Activated CD4-positive, alpha-beta T cell treated with anti-CD3 and anti-CD28 coated beads for 36 hours (primary cell): ENCODE measurements at regions of chr18 and their contacts with region 1.

Region 1: DNA sequence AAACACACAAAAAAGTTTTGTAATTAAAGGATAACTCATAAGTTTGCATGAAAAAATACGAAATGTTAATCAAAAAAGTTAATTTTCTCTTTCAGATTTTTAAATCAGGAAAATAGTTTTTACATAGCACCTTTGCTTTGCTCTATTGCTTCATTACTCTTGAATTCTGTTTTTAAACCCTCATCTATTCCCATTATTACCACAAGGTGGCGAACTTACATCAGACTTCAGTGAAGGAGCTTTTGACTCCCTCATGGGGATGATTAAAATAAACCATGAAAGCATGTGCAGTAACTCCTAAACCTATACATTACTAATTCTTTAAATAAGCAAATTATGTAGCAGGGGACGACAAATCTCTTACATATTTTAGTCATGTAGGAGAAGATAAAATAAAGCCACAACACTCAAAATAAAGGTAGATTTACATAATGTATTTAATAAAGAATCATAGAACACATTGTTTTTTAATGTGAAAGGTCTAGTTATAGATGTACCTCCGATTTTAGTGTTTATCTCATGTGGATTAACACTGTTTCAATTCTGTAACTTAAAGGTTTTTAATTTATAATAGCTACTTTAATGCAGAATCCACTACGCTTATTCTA is 105.2 kb downstream of the NETO1 start:
- DNase-seq: no peak
- ATAC-seq: no peak
- H3K4me3 Mint-ChIP-seq: no peak overlapping the region
- H3K27ac Mint-ChIP-seq: no peak overlapping the region
- H3K4me1 Mint-ChIP-seq: no peaks in the 10 kb centered on the region
- H3K27me3 Mint-ChIP-seq: peaks cover 2% of the 10 kb centered on the region

Region 2: DNA sequence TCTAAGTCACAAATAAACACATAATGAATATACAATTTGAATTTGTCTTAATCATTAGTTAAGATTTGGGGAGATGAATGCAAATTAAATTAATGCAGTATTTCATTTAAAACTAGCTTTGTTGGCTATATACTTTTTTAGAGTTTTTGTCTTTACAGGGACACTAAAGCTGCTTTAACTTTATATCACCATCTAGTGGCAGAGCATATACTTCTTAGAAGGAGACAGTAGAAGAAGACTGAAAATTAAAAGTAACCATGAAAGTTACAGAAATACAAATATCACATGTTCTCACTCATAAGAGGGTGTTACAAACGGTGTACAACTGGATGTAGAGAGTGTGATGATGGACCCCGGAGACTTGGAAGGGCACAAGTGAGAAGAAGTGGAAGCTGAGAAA is 373.5 kb after region 1 on chr18:
- CTCF ChIA-PET with region 1: no interaction called
- POLR2A ChIA-PET with region 1: no interaction called
- intact Hi-C with region 1: loop called (anchors 1 to 10 kb)
- DNase-seq: no peak
- ATAC-seq: no peak
- H3K4me3 Mint-ChIP-seq: no peak overlapping the region
- H3K27ac Mint-ChIP-seq: no peak overlapping the region
- H3K4me1 Mint-ChIP-seq: no peaks in the 10 kb centered on the region
- H3K27me3 Mint-ChIP-seq: no peaks in the 10 kb centered on the region

Region 3: DNA sequence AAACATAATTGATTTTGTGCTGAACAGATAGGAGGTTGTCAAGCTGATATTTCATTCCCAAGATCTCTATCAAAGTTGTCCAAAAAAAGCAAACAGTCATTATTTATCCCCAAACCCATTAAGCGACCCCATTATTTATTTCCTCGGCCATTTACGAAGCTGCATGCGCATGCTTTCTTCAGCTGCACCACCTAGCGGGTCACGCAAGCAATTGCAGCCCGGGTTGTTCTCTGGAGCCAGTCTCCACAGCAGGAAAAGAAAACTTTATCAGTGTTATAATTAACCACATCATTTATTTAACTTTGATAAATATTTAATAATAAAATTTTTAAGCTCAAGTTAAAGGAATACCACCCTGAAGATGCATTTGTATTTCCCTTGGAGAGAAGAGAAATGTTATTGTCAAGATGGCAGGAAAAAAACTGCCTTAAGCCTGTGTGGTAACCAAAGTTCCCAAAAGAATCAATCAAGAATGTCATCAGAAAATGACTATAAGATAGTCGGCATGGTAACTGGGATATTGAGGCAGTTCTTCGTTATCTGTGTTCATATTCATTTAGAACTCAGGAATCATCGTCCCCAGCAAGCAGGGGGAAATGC is 1080.3 kb after region 1 on chr18:
- CTCF ChIA-PET with region 1: interaction called, 16 read pairs
- POLR2A ChIA-PET with region 1: no interaction called
- intact Hi-C with region 1: loop called (anchors 1 to 2 kb)
- DNase-seq: peak; percentile 69
- ATAC-seq: peak; percentile 57
- H3K4me3 Mint-ChIP-seq: peak overlapping the region; percentile 34
- H3K27ac Mint-ChIP-seq: no peak overlapping the region
- H3K4me1 Mint-ChIP-seq: peaks cover 5% of the 10 kb centered on the region
- H3K27me3 Mint-ChIP-seq: peaks cover 3% of the 10 kb centered on the region

Region 4: GRCh38 chr18:74116633-74117554 is 1354.3 kb after region 1 on chr18:
- CTCF ChIA-PET with region 1: no interaction called
- POLR2A ChIA-PET with region 1: no interaction called
- intact Hi-C with region 1: loop called in 1 of 2 experiments (anchors 5 kb)
- DNase-seq: peak; percentile 55
- ATAC-seq: peak; percentile 70
- H3K4me3 Mint-ChIP-seq: no peak overlapping the region
- H3K27ac Mint-ChIP-seq: no peak overlapping the region
- H3K4me1 Mint-ChIP-seq: peaks cover 11% of the 10 kb centered on the region
- H3K27me3 Mint-ChIP-seq: no peaks in the 10 kb centered on the region